Activated CD4-positive, alpha-beta T cell treated with anti-CD3 and anti-CD28 coated beads for 36 hours (primary cell): ENCODE measurements at regions of chr14 and their contacts with region 1.

Region 1: GRCh38 chr14:88667555-88668273 is 104.9 kb downstream of the ZC3H14 start:
- DNase-seq: peak; percentile 60
- ATAC-seq: peak; percentile 78
- H3K4me3 Mint-ChIP-seq: no peak overlapping the region
- H3K27ac Mint-ChIP-seq: no peak overlapping the region
- H3K4me1 Mint-ChIP-seq: no peaks in the 10 kb centered on the region
- H3K27me3 Mint-ChIP-seq: no peaks in the 10 kb centered on the region

Region 2: GRCh38 chr14:88682495-88683114 is 14.9 kb after region 1 on chr14:
- CTCF ChIA-PET with region 1: interaction called, 18 read pairs
- POLR2A ChIA-PET with region 1: no interaction called
- intact Hi-C with region 1: no loop called
- DNase-seq: peak; percentile 10
- ATAC-seq: peak; percentile 26
- H3K4me3 Mint-ChIP-seq: no peak overlapping the region
- H3K27ac Mint-ChIP-seq: no peak overlapping the region
- H3K4me1 Mint-ChIP-seq: no peaks in the 10 kb centered on the region
- H3K27me3 Mint-ChIP-seq: no peaks in the 10 kb centered on the region

Region 3: DNA sequence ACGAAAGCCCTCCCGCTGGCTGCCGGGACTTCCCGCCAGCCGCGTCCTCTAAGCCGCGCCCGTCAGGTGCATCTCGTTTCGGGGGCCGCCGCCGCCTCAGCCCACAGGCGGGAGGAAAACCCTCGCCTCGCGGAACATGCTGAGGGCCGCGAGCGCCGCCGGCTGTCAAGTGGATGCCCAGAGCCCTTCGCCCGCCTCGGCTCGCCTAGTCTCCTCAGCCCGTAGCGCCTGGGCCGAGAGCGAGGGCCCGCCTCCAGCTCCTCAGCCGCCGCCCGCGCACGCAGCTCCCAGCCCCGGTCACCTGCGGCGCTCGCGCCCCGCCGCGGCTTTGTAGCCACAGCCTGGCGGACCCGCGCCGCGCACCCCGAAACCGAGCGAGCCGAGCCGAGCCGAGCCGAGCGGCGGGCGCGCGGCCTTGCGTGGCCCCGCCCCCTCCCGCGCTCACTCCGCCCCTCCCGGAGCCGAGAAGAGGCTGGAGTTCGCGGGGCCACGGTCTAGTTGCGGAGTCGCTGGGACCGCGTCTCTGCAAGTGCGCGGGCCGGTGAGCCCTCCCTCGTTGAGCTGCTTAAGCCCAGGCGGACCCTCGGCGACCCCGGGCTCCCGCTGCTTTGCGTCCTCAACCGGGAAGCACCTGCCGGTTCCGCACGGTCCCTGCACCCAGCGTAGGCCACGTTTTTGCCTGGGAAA is 125.0 kb after region 1 on chr14 and contains the start of gene EML5:
- CTCF ChIA-PET with region 1: interaction called, 3 read pairs
- POLR2A ChIA-PET with region 1: no interaction called
- intact Hi-C with region 1: loop called (anchors 5 kb)
- DNase-seq: peak; percentile 90
- ATAC-seq: peak; percentile 76
- H3K4me3 Mint-ChIP-seq: peak within 1 kb of the TSS; percentile 87
- H3K27ac Mint-ChIP-seq: peak within 1 kb of the TSS; percentile 87
- H3K4me1 Mint-ChIP-seq: peaks cover 26% of the 10 kb centered on the region
- H3K27me3 Mint-ChIP-seq: no peaks in the 10 kb centered on the region
- total RNA-seq, gene EML5: 8.1 TPM

Region 4: GRCh38 chr14:88824314-88825077 is 156.8 kb after region 1 on chr14 and contains the start of gene TTC8:
- CTCF ChIA-PET with region 1: interaction called, 11 read pairs
- POLR2A ChIA-PET with region 1: no interaction called
- intact Hi-C with region 1: loop called in 1 of 2 experiments (anchors 1 kb)
- DNase-seq: peak; percentile 90
- ATAC-seq: peak; percentile 97
- H3K4me3 Mint-ChIP-seq: peak within 1 kb of the TSS; percentile 81
- H3K27ac Mint-ChIP-seq: peak within 1 kb of the TSS; percentile 94
- H3K4me1 Mint-ChIP-seq: peaks cover 8% of the 10 kb centered on the region
- H3K27me3 Mint-ChIP-seq: peaks cover 3% of the 10 kb centered on the region
- total RNA-seq, gene TTC8: 2.9 to 4.4 TPM

Region 5: GRCh38 chr14:88868558-88869159 is 200.9 kb after region 1 on chr14:
- CTCF ChIA-PET with region 1: interaction called, 19 read pairs
- POLR2A ChIA-PET with region 1: no interaction called
- intact Hi-C with region 1: loop called (anchors 1 kb)
- DNase-seq: no peak
- ATAC-seq: no peak
- H3K4me3 Mint-ChIP-seq: no peak overlapping the region
- H3K27ac Mint-ChIP-seq: no peak overlapping the region
- H3K4me1 Mint-ChIP-seq: no peaks in the 10 kb centered on the region
- H3K27me3 Mint-ChIP-seq: no peaks in the 10 kb centered on the region

Region 6: GRCh38 chr14:89013084-89013504 is 345.4 kb after region 1 on chr14:
- CTCF ChIA-PET with region 1: interaction called, 3 read pairs
- POLR2A ChIA-PET with region 1: no interaction called
- intact Hi-C with region 1: loop called (anchors 1 to 5 kb)
- DNase-seq: peak; percentile 59
- ATAC-seq: peak; percentile 74
- H3K4me3 Mint-ChIP-seq: no peak overlapping the region
- H3K27ac Mint-ChIP-seq: no peak overlapping the region
- H3K4me1 Mint-ChIP-seq: no peaks in the 10 kb centered on the region
- H3K27me3 Mint-ChIP-seq: peaks cover 18% of the 10 kb centered on the region

Region 7: DNA sequence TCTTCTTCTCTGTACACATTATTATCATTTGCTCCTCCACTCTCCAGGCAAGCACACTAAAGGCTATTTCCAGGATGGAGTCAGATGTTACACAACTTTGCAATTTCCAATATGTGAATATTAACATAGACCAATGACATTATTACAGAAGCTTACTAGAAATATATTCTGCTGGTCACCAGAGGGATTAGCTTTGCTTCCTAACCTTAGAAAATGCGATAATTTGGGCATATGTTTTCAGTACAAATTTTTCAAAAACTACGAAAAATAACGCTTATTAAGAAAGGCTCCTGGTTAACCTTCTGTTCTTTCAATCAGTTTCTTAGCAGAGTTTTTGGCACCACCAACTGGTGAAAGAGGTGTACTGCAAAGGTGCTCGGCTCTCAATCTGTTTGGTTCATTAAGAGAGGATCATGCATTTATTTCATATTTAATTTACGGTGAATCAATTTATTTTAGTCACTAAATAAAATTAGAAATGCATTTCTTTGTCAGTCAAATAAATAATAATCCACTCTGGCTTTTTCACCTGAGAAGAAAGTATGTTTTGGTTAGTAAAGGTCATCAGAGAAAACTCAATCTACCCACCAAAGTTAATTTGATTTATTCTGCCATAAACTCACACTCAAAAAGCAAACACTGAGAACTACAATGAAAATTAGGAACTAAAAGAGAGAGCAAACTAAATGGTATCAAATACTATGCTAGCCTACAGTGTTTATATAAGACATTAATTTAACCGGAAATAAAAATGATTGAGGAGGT is 1247.6 kb after region 1 on chr14:
- CTCF ChIA-PET with region 1: no interaction called
- POLR2A ChIA-PET with region 1: no interaction called
- intact Hi-C with region 1: loop called in 1 of 2 experiments (anchors 10 kb)
- DNase-seq: peak; percentile 73
- ATAC-seq: no peak
- H3K4me3 Mint-ChIP-seq: no peak overlapping the region
- H3K27ac Mint-ChIP-seq: no peak overlapping the region
- H3K4me1 Mint-ChIP-seq: peaks cover 3% of the 10 kb centered on the region
- H3K27me3 Mint-ChIP-seq: peaks cover 3% of the 10 kb centered on the region